OCI-LY7 (cell line): ENCODE measurements at regions of chr1 and their contacts with region 1.

Region 1: DNA sequence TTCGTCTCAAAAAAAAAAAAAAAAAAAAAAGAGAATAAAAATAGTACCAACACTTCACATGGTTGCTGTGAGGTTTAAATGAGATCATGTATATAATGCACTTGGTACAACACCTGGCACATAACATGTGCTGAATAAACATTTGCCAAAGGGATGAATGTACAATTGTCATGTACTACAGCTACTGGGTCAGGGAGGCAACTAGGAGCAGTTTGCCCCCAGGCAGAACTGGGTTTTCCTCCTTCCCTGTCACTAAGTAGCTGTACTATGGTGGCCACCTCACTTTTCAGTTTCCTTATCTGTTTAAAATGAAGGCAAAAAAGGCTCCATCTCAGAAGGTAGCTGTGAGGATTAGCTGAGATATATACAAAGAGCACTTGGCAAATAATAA is 11.5 kb downstream of the AK2 start:
- DNase-seq: no peak
- H3K4me3 ChIP-seq: no peak overlapping the region
- H3K27ac ChIP-seq: no peak overlapping the region
- H3K4me1 ChIP-seq: no peaks in the 10 kb centered on the region
- CTCF ChIP-seq: no peak

Region 2: DNA sequence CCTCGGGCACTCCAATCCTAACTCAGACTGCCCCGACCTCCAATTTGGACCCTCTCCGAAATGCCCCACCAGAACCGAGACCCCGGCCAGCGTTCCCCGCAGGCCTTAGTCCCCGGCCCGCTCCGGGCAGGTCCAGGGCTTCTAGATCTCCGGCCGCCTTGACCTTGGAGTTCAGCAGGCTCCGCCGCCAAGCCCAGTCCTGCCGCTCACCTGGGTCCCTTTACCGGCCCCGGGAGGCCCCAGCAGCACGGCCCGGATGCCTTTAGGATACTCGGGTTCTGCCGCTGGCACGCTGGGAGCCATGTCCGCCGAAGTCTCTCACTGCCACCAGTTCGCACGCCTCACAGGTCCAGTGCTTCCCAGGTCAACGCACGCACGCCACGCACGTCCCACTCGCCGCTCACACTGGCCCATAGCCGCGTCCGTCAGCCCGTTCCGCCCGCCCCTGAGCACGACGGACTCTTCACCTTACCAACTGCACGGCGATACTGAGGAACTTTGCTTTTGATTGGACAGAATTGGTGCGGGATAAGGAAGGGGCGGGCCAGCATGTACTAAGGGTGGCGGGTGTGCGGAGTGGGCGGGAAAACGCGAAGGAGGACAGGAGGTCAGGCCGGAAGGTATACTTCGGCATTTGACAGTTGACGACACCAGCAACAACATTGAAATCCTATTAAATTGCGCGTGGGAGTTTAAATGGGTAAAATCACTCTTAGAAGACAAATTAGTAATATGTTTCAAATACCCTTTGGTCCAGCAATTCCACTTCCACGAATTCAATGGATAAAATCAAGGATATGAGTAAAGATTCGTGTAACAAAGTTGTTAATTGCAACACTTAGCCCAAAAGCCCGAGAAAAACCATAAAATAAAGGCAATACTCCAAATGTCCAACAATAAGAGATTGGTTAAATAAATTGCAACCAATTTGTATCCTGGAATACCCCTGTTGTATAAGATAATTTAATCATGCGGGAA is 11.6 kb after region 1 on chr1 and contains the start of gene AK2:
- CTCF ChIA-PET with region 1: no interaction called
- POLR2A ChIA-PET with region 1: interaction called, 10 read pairs
- intact Hi-C with region 1: no loop called
- DNase-seq: peak; percentile 96
- H3K4me3 ChIP-seq: peak within 1 kb of the TSS; percentile 86
- H3K27ac ChIP-seq: peak within 1 kb of the TSS; percentile 6
- H3K4me1 ChIP-seq: peaks cover 43% of the 10 kb centered on the region
- CTCF ChIP-seq: no peak
- total RNA-seq, gene AK2: 185 and 223 TPM in 2 replicates